ENCODE measurements at regions of chr3 and their contacts with region 1.

Region 1: DNA sequence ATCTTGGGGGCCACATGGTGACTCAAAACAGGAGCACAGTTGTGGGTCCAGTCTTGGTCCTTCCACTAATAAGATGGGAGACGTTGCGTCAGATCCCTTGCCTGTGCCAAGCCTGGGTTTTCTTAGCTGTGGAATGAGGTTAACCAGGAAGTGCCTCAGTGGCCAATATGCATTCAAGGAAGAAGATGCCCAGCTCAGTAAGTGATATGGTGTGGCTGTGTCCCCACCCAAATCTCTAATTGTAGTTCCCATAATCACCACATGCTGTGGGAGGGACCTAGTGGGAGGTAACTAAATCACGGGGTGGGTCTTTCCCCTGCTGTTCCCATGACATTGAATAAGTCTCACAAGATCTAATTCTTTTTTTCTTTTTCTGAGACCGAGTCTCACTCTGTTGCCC is 6.4 kb downstream of the ALG1L2 start:
- DNase-seq: no peak
- H3K4me3 ChIP-seq: no peak overlapping the region
- H3K4me3 Mint-ChIP-seq: no peak overlapping the region
- H3K27ac ChIP-seq: no peak overlapping the region
- H3K27ac Mint-ChIP-seq: no peak overlapping the region
- H3K4me1 ChIP-seq: peaks cover under 1 to 7% of the 10 kb centered on the region in 2 donors
- H3K4me1 Mint-ChIP-seq: peaks cover 20% of the 10 kb centered on the region
- H3K27me3 ChIP-seq: no peaks in the 10 kb centered on the region
- H3K27me3 Mint-ChIP-seq: peaks cover 1 to 5% (median 2%) of the 10 kb centered on the region in 3 donors
- CTCF ChIP-seq: no peak

Region 2: GRCh38 chr3:130048726-130049125 is 39.3 kb before region 1 on chr3:
- intact Hi-C with region 1: loop called in 1 of 2 experiments (anchors 2 kb)
- DNase-seq: no peak
- H3K4me3 ChIP-seq: no peak overlapping the region
- H3K4me3 Mint-ChIP-seq: no peak overlapping the region
- H3K27ac ChIP-seq: no peak overlapping the region
- H3K27ac Mint-ChIP-seq: no peak overlapping the region
- H3K4me1 ChIP-seq: no peaks in the 10 kb centered on the region
- H3K4me1 Mint-ChIP-seq: peaks cover 8% of the 10 kb centered on the region
- H3K27me3 ChIP-seq: no peaks in the 10 kb centered on the region
- H3K27me3 Mint-ChIP-seq: peaks cover 0 to 2% (median 0%) of the 10 kb centered on the region in 3 donors
- CTCF ChIP-seq: no peak